Left cardiac atrium (tissue), 4 donors: ENCODE measurements at regions of chr4 and their contacts with region 1.

Region 1: DNA sequence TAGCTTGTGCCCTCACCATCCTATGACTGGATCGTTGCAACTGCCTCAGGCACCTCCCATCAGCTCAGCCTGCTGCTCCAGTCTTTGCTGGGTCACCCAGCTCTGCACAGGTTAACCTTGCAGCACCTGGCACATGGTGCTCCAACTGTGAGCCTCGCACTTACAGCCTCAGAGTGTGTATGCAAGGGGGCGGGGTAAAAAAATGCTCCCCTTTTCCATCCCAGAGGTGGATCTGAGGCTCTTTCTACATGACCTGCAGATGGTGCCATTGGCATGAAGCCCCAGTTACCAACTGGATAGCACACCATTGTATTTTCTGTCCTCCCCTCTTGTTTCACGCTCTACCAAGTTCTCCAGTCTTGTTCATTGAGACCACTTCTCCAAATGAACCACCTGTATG is 46.1 kb upstream of the TRPC3 start:
- DNase-seq: peak; percentile 26
- ATAC-seq: peak in 1 of 2 donors; percentile 30

Region 2: GRCh38 chr4:122218762-122219161 is 220.8 kb after region 1 on chr4:
- intact Hi-C with region 1: loop called in 1 of 2 experiments (anchors 5 kb)
- DNase-seq: no peak
- ATAC-seq: no peak

Region 3: DNA sequence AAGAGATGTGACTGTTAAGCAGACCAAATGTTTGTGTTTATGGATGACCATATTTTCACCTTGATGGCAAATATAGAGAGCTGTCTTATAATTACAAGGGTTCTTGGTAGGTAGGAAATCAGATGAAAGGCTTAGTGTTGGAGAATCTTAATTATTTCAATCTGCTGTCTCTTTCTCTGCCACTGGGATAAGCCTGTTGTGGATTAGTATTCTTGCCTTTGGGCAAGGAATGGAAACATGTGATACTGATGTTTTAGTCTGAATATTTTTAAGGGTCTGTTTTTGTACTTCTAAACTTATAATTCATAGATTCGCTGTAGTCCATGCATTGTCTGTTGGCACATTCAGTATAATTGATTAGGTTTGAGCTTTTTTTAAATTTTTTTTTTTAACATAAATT is 948.1 kb after region 1 on chr4:
- intact Hi-C with region 1: no loop called
- DNase-seq: no peak
- ATAC-seq: no peak